Heart left ventricle (tissue), 16 donors: ENCODE measurements at regions of chr10 and their contacts with region 1.

Region 1: DNA sequence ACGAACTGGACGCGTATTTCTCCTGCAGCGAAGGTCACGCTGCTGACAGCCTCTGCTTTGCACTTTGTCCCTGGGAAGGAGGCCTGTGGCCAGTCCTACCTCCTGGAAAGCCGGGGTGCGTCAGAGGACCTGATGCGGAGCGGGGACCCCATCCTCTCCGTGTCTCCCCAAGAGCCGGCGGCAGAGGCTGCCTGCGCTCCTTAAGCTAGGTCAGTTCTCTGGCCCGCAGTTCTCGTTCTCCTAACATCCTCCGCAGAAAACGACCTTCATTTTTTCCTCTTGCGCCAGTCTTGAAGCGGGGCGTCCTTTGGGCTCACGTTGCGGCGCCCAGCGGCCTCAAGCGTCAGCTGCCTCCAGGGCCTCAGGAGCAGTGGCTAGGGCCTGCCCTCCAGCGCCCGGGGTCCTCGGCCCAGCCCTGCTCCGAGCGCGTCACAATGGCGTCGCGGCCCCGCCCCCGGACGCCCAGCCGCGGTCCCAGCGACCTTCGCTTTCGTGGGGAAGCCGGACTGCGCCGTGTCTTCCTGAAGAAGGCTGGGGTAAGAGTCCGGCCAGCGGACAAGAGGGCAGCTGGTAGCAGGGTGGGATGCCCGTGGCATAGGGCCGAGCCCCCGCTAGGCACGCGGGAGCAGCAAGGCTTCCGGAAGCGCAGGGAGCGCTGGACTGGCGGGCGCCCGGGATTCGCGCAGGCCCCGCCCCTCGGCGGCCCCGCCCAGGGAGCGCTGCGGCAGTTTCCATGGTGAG is at the start of gene ZNF487:
- DNase-seq: peak; percentile 90 to 94 (median 92)
- ATAC-seq: peak; percentile 98 to 99 (median 99)
- H3K4me3 ChIP-seq: peak within 1 kb of the TSS; percentile 55 to 99 (median 81)
- H3K27ac ChIP-seq: peak within 1 kb of the TSS; percentile 94 to 100 (median 98)
- H3K4me1 ChIP-seq: peaks cover 0 to 26% (median 13%) of the 10 kb centered on the region in 12 donors
- H3K27me3 ChIP-seq: no peaks in the 10 kb centered on the region
- CTCF ChIP-seq: peak in 8 of 12 donors; percentile 7 to 54 (median 34)
- POLR2A ChIP-seq: peak in 1 of 2 donors; percentile 94
- total RNA-seq, gene ZNF487: 1.8 to 5.1 (median 2.4) TPM

Region 2: GRCh38 chr10:43138021-43138756 is 298.4 kb before region 1 on chr10 and contains the start of gene CSGALNACT2:
- intact Hi-C with region 1: no loop called
- DNase-seq: peak; percentile 85 to 92 (median 89)
- ATAC-seq: peak; percentile 76 to 97 (median 93)
- H3K4me3 ChIP-seq: peak within 1 kb of the TSS; percentile 70 to 99 (median 93)
- H3K27ac ChIP-seq: peak within 1 kb of the TSS; percentile 76 to 99 (median 92)
- H3K4me1 ChIP-seq: peaks cover 0 to 59% (median 12%) of the 10 kb centered on the region in 12 donors
- H3K27me3 ChIP-seq: no peaks in the 10 kb centered on the region
- CTCF ChIP-seq: no peak
- POLR2A ChIP-seq: peak in 1 of 2 donors; percentile 68
- total RNA-seq, gene CSGALNACT2: 6.3 to 17.7 (median 8.8) TPM

Region 3: GRCh38 chr10:43361986-43362839 is 74.4 kb before region 1 on chr10:
- intact Hi-C with region 1: loop called in 1 of 10 experiments (anchors 2 kb)
- DNase-seq: peak; percentile 94 to 98 (median 98)
- ATAC-seq: peak; percentile 93 to 99 (median 97)
- H3K4me3 ChIP-seq: peak overlapping the region; percentile 34 to 72 (median 59)
- H3K27ac ChIP-seq: peak overlapping the region in 10 of 12 donors; percentile 47 to 78 (median 68)
- H3K4me1 ChIP-seq: peaks cover 0 to 16% (median 6%) of the 10 kb centered on the region in 12 donors
- H3K27me3 ChIP-seq: no peaks in the 10 kb centered on the region
- CTCF ChIP-seq: peak; percentile 26 to 75 (median 50)
- POLR2A ChIP-seq: peak in 1 of 2 donors; percentile 19

Region 4: GRCh38 chr10:43380610-43381222 is 55.9 kb before region 1 on chr10:
- intact Hi-C with region 1: no loop called
- DNase-seq: no peak
- ATAC-seq: no peak
- H3K4me3 ChIP-seq: no peak overlapping the region
- H3K27ac ChIP-seq: no peak overlapping the region
- H3K4me1 ChIP-seq: peaks cover 0 to 8% (median 0%) of the 10 kb centered on the region in 12 donors
- H3K27me3 ChIP-seq: no peaks in the 10 kb centered on the region
- CTCF ChIP-seq: no peak
- POLR2A ChIP-seq: no peak

Region 5: DNA sequence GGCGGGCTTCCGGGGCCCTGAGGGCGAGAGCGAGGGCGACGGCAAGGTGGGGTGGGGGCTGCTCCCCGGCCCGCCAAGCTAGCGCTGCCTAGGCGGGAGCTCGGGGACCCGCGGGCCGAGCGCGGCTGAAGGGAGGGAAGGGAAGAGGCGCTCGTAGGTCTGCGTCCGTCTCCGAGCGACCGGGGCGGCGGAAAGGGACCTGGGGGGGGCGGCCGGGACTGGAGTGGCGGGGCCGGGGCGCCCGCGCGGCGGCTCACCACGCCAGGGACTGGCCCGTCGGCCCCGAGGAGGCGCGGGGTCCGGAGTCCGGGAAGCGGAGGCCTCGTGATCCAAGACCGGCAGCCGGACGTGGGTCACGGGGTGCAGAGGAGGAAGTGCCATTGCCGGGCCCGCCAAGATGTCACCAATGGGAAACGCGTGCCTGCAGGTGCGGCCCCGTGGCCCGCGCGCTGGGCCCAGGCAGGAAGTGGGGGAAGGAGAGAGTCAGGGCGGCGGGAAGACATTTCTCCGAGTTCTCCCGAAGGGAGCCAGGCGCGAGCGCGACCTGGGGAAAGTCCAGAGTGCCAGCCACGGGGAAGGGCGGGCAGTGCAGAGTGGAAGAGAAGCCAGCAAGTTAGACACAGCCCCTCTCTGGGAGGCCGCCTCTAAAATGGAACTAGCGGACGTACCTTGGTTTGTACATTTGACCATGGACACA is 39.5 kb before region 1 on chr10:
- intact Hi-C with region 1: loop called in 6 of 10 experiments (anchors 2 to 5 kb)
- DNase-seq: peak; percentile 91 to 93 (median 92)
- ATAC-seq: peak; percentile 87 to 92 (median 92)
- H3K4me3 ChIP-seq: peak overlapping the region; percentile 12 to 90 (median 73)
- H3K27ac ChIP-seq: peak overlapping the region; percentile 90 to 99 (median 96)
- H3K4me1 ChIP-seq: peaks cover 0 to 84% (median 42%) of the 10 kb centered on the region in 12 donors
- H3K27me3 ChIP-seq: no peaks in the 10 kb centered on the region
- CTCF ChIP-seq: no peak
- POLR2A ChIP-seq: peak in 1 of 2 donors; percentile 47

Region 6: DNA sequence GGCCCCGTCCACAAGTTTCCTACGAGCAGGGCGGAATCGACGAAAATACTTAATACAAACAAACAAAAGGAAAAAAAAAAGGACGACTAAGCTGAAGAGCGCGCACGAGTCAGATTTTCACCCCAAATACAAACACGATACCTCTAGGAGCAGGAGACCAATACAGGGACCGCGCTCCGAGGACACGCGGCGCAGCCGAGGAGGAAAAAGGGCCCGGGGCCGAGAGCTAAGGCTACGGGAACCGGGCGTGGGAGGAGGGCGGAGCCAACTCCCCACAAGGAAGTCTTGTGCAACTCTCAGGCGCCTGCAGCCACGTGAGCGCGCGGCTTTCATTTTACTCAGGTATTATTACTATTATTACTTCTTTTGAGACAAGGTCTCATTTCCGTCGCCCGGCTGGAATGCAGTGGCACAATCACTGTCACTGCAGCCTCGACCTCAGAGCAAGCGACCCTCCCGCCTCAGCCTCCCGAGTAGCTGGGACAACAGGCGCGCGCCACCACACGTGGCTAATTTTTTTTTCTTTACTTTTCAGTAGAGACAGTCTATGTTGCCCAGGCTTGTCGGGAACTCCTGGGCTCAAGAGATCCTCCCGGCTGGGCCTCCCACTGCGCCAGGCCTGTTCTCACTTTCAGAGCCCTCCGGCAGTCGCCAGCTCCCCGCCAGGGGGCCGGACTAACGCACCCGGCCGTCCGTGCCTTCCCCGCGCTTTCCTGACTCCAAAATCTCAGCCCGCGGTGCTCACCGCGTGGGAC is 28.8 kb before region 1 on chr10:
- intact Hi-C with region 1: loop called in 1 of 10 experiments (anchors 1 kb)
- DNase-seq: peak; percentile 92 to 94 (median 93)
- ATAC-seq: peak; percentile 77 to 79 (median 78)
- H3K4me3 ChIP-seq: peak overlapping the region; percentile 64 to 90 (median 83)
- H3K27ac ChIP-seq: peak overlapping the region; percentile 96 to 100 (median 98)
- H3K4me1 ChIP-seq: peaks cover 13 to 57% (median 37%) of the 10 kb centered on the region in 12 donors
- H3K27me3 ChIP-seq: no peaks in the 10 kb centered on the region
- CTCF ChIP-seq: peak in 8 of 12 donors; percentile 16 to 47 (median 35)
- POLR2A ChIP-seq: no peak

Region 7: DNA sequence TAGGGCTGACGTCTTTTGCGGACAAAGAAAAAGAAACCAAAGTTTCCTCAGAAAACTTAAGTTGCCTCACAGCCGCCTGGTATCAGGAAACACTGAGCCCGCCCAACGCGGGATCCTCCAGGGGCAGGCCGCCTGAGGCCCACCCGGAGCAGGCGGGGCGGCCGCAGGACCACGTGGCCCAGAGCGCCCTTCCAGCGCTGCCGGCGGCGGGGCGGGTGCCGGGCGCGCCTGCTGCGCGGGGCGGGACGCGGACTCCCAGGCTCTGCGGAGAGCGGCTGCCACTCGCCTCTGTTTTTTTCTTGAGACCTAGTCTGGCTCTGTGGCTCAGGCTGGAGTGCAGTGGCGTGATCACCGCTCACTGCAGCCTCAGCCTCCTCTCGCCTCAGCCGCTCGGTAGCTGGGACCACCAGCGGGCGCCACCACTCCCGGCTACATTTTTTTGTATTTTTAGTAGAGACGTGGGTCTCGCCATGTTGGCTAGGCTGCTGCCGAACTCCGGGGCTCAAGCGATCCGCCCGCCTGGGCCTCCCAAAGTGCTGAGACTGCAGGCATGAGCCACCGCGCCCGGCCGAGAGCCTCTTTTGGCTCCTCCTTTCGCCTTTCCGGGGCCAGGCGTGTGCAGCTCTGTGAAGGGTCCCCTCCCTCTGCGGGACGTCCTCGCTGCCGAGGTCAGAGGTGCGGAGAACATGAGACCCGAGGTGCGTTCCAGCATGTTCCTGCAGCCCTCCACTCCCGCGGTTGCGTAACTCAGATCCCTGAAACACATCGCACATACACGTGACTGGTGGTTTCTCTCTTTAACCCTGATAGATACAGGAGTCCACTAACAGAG is 16.0 kb before region 1 on chr10:
- intact Hi-C with region 1: loop called in 5 of 10 experiments (anchors 1 to 2 kb)
- DNase-seq: peak; percentile 91 to 94 (median 93)
- ATAC-seq: peak; percentile 94 to 99 (median 96)
- H3K4me3 ChIP-seq: peak overlapping the region; percentile 22 to 86 (median 66)
- H3K27ac ChIP-seq: peak overlapping the region; percentile 95 to 100 (median 98)
- H3K4me1 ChIP-seq: peaks cover 0 to 42% (median 9%) of the 10 kb centered on the region in 12 donors
- H3K27me3 ChIP-seq: no peaks in the 10 kb centered on the region
- CTCF ChIP-seq: peak in 6 of 12 donors; percentile 8 to 57 (median 30)
- POLR2A ChIP-seq: peak in 1 of 2 donors; percentile 76

Region 8: DNA sequence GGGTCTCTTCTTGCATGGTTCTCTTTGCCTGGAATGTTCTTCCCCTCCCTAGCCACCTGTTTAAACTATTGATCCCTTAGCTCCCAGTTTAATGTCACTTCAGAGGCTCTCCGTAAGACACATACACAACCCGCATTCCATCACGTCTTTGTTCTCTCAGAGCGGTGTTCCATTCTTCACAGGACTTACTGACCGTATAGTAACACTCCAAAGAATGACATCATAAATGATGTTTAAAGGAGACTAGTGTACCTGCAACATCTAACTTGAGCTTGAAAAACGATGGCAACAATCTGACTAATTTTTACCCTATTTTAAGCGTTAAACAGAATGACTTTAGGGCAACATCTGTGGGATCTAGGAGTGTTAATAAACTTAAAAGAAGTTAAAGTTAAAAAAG is 127.5 kb after region 1 on chr10:
- intact Hi-C with region 1: no loop called
- DNase-seq: no peak
- ATAC-seq: no peak
- H3K4me3 ChIP-seq: no peak overlapping the region
- H3K27ac ChIP-seq: no peak overlapping the region
- H3K4me1 ChIP-seq: no peaks in the 10 kb centered on the region
- H3K27me3 ChIP-seq: no peaks in the 10 kb centered on the region
- CTCF ChIP-seq: no peak
- POLR2A ChIP-seq: no peak